MCF 10A (cell line): ENCODE measurements at regions of chr2 and their contacts with region 1.

Region 1: GRCh38 chr2:3423492-3424175 is 44.1 kb downstream of the TRAPPC12 start:
- DNase-seq: peak; percentile 64
- H3K4me3 Mint-ChIP-seq: no peak overlapping the region
- H3K27ac Mint-ChIP-seq: no peak overlapping the region
- H3K4me1 Mint-ChIP-seq: peaks cover 6% of the 10 kb centered on the region
- H3K27me3 Mint-ChIP-seq: no peaks in the 10 kb centered on the region
- CTCF ChIP-seq: peak; percentile 91

Region 2: GRCh38 chr2:3324404-3325281 is 99.0 kb before region 1 on chr2:
- CTCF ChIA-PET with region 1: no interaction called
- POLR2A ChIA-PET with region 1: no interaction called
- intact Hi-C with region 1: no loop called
- DNase-seq: no peak
- H3K4me3 Mint-ChIP-seq: no peak overlapping the region
- H3K27ac Mint-ChIP-seq: no peak overlapping the region
- H3K4me1 Mint-ChIP-seq: no peaks in the 10 kb centered on the region
- H3K27me3 Mint-ChIP-seq: no peaks in the 10 kb centered on the region
- CTCF ChIP-seq: no peak

Region 3: DNA sequence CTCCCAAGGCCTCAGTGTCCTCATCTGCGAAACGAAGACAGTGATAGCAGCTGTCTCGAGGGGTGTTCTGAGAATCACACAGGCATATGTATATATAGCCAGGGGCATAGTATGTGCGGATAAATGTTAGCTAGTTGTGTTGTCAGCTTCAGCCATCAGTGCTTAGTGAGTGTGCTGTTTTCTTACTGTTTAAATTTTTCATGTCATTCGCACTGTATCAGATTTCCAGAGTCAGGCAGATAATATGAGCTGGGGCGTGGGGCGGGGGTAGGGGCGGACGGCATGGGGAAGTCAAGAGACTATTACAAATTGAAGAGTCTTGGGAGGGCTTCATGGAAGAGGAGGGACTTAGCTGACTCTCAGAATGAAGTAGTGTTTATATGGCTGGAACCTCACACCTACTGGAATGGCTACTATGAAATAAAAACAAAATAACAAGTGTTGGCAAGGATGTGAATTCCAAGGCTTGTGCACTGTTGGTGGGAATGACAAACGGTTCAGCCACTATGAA is 37.1 kb before region 1 on chr2:
- CTCF ChIA-PET with region 1: interaction called, 11 read pairs
- POLR2A ChIA-PET with region 1: no interaction called
- intact Hi-C with region 1: no loop called
- DNase-seq: no peak
- H3K4me3 Mint-ChIP-seq: no peak overlapping the region
- H3K27ac Mint-ChIP-seq: no peak overlapping the region
- H3K4me1 Mint-ChIP-seq: peaks cover 4% of the 10 kb centered on the region
- H3K27me3 Mint-ChIP-seq: no peaks in the 10 kb centered on the region
- CTCF ChIP-seq: no peak

Region 4: DNA sequence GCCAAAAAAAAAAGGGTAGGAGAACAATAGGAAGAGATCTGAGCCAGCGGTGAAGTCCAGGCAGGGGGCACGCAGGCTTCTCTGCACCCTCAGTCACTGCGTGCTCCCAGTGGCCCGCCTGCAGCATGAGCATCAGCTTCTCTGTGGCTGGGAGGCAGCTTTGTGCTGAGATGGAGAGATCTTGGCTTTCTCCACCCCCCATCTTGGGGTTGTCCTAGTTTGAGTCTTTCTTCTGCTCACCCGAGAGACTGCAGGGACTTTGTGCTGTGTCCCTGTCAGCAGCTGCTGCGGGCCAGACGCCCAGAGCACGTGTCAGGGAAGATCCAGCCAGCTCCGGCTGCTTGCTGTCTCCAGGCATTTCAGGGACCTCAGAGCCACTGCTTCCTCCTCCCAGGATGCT is 23.8 kb before region 1 on chr2:
- CTCF ChIA-PET with region 1: interaction called, 12 read pairs
- POLR2A ChIA-PET with region 1: no interaction called
- intact Hi-C with region 1: no loop called
- DNase-seq: no peak
- H3K4me3 Mint-ChIP-seq: no peak overlapping the region
- H3K27ac Mint-ChIP-seq: no peak overlapping the region
- H3K4me1 Mint-ChIP-seq: no peaks in the 10 kb centered on the region
- H3K27me3 Mint-ChIP-seq: no peaks in the 10 kb centered on the region
- CTCF ChIP-seq: no peak

Region 5: DNA sequence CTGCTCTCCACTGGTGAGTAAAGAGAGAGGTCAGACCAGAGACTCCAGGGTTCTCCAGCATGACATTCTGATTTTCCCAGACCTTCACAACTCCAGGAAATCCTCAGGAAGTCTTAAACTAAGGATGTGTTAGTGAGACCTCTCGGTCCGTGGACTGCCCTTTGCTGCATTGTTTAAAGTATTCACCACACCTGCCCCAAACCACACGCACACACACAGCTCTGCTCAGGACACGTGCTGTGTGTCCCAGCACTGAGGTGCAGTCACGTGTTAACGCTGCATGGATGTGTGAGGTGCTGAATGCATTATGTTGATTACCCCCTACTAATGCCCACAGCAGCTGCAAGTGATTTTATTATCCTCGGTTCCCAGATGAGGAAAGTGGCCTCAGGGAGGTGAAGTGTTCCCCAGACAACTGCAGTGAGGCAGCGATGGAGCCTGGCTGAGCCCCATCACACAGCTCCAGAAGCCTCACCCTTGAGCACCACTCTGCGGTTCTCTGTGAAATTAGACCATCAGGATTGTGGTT is 24.2 kb after region 1 on chr2:
- CTCF ChIA-PET with region 1: interaction called, 54 read pairs
- POLR2A ChIA-PET with region 1: no interaction called
- intact Hi-C with region 1: no loop called
- DNase-seq: no peak
- H3K4me3 Mint-ChIP-seq: no peak overlapping the region
- H3K27ac Mint-ChIP-seq: no peak overlapping the region
- H3K4me1 Mint-ChIP-seq: no peaks in the 10 kb centered on the region
- H3K27me3 Mint-ChIP-seq: no peaks in the 10 kb centered on the region
- CTCF ChIP-seq: no peak

Region 6: GRCh38 chr2:3453190-3454014 is 29.8 kb after region 1 on chr2:
- CTCF ChIA-PET with region 1: interaction called, 16 read pairs
- POLR2A ChIA-PET with region 1: no interaction called
- intact Hi-C with region 1: no loop called
- DNase-seq: no peak
- H3K4me3 Mint-ChIP-seq: no peak overlapping the region
- H3K27ac Mint-ChIP-seq: no peak overlapping the region
- H3K4me1 Mint-ChIP-seq: no peaks in the 10 kb centered on the region
- H3K27me3 Mint-ChIP-seq: no peaks in the 10 kb centered on the region
- CTCF ChIP-seq: no peak

Region 7: GRCh38 chr2:3461801-3462492 is 38.3 kb after region 1 on chr2:
- CTCF ChIA-PET with region 1: interaction called, 45 read pairs
- POLR2A ChIA-PET with region 1: interaction called, 3 read pairs
- intact Hi-C with region 1: loop called (anchors 1 kb)
- DNase-seq: peak; percentile 73
- H3K4me3 Mint-ChIP-seq: no peak overlapping the region
- H3K27ac Mint-ChIP-seq: no peak overlapping the region
- H3K4me1 Mint-ChIP-seq: peaks cover 14% of the 10 kb centered on the region
- H3K27me3 Mint-ChIP-seq: no peaks in the 10 kb centered on the region
- CTCF ChIP-seq: peak; percentile 74

Region 8: GRCh38 chr2:3651691-3652648 is 228.3 kb after region 1 on chr2:
- CTCF ChIA-PET with region 1: interaction called, 25 read pairs
- POLR2A ChIA-PET with region 1: no interaction called
- intact Hi-C with region 1: loop called (anchors 5 kb)
- DNase-seq: no peak
- H3K4me3 Mint-ChIP-seq: no peak overlapping the region
- H3K27ac Mint-ChIP-seq: no peak overlapping the region
- H3K4me1 Mint-ChIP-seq: peaks cover 7% of the 10 kb centered on the region
- H3K27me3 Mint-ChIP-seq: no peaks in the 10 kb centered on the region
- CTCF ChIP-seq: no peak

Region 9: DNA sequence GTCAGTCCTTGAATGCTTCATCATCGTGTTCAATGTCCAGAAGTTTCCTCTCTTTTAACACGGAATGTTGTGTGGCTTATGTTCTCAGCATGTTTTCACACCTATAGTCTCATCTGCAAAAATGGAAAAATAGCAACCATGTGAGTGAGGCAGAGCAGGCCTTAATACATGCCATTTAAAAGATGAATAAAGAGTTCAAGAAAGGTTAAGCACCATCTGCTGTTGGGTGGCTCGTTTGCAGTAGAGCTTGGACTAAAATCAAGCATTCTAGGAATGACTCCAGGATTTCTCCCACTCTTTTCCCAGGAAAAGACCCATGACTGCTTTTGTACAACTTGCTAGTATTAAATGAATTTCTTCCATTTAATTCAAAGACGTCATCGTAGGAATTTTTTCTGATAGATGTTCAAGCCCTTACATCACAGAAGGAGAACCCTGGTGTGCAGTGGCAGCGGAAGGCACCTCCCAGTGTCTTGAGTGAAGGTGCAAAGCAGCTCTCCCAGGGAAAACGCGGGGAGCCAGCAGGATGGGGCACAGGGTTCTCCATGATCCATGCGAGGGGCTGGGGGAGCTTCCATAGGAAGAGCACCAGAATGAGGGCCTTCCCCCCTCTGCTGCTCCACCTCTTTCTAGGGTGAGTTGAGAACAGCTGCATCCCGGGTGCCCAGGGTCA is 289.3 kb after region 1 on chr2:
- CTCF ChIA-PET with region 1: no interaction called
- POLR2A ChIA-PET with region 1: no interaction called
- intact Hi-C with region 1: no loop called
- DNase-seq: no peak
- H3K4me3 Mint-ChIP-seq: no peak overlapping the region
- H3K27ac Mint-ChIP-seq: no peak overlapping the region
- H3K4me1 Mint-ChIP-seq: peaks cover 14% of the 10 kb centered on the region
- H3K27me3 Mint-ChIP-seq: no peaks in the 10 kb centered on the region
- CTCF ChIP-seq: no peak

Region 10: DNA sequence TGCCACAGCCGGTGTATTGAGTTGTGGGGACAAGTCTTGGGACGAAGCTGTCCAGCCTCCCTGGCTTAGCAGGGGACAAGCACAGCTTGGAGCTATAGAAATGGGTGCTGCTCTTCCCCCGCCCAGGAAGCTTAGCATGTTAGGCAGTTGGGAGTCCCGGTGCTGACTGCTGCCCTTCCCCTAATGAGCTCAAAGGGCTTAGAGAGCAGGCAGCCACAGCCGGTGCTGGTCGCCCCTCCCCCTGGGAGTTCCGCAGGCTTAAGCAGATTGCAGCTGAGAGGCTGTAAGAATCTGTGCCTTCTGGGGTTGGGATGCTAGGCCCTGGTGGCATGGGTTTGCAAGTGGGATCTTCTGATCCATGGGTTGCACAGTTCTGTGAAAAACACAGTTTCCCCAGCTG is 517.0 kb after region 1 on chr2:
- CTCF ChIA-PET with region 1: no interaction called
- POLR2A ChIA-PET with region 1: no interaction called
- intact Hi-C with region 1: no loop called
- DNase-seq: no peak
- H3K4me3 Mint-ChIP-seq: no peak overlapping the region
- H3K27ac Mint-ChIP-seq: no peak overlapping the region
- H3K4me1 Mint-ChIP-seq: no peaks in the 10 kb centered on the region
- H3K27me3 Mint-ChIP-seq: no peaks in the 10 kb centered on the region
- CTCF ChIP-seq: no peak